ENCODE measurements at regions of chr3 and their contacts with region 1.

Region 1: GRCh38 chr3:157447026-157447694 is 10.5 kb downstream of the PTX3 start:
- DNase-seq: peak; percentile 17
- H3K4me3 ChIP-seq: no peak overlapping the region
- H3K27ac ChIP-seq: no peak overlapping the region
- H3K4me1 ChIP-seq: no peaks in the 10 kb centered on the region
- H3K27me3 ChIP-seq: peaks cover 2% of the 10 kb centered on the region
- CTCF ChIP-seq: peak; percentile 48 to 70

Region 2: GRCh38 chr3:157327018-157327417 is 120.1 kb before region 1 on chr3:
- CTCF ChIA-PET with region 1: no interaction called
- dilution Hi-C with region 1: no loop called
- in situ Hi-C with region 1: no loop called
- intact Hi-C with region 1: loop called (anchors 1 kb)
- DNase-seq: no peak
- H3K4me3 ChIP-seq: no peak overlapping the region
- H3K27ac ChIP-seq: no peak overlapping the region
- H3K4me1 ChIP-seq: no peaks in the 10 kb centered on the region
- H3K27me3 ChIP-seq: no peaks in the 10 kb centered on the region
- CTCF ChIP-seq: peak in 1 of 2 donors; percentile 5

Region 3: DNA sequence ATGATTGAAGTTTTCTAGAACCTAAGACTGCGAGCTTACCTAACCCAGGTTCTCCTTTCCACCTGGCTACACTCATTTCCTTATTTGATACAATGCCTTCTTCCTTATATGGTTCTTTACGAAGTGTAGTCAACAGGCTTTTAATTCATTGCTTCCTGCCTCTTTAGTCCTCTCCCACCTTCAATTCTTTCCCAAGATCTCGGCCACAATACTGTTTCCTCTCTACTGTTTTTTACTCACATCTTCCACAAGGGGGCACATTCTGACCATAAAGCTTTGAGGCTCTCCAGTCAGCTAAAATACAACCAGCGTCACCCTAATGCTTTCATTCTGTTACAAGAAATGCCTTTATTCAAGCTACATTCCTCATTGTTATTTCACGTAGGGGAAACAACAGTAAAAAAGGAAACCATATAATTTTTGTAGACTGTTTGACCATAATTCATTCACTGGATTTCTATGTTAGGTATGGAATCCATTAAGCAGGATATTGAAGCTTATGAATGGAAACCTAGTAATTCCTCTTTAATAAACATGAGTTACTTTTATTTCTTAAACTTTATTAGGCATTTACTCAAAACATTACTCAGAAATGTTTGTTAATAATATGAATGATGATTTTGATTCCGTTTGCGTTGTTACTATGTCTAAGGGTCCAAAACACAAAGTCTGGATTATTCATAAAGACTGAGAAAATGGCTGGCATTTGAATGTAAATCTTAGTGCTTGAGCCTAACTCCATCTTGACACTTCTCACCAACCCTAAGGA is 85.6 kb after region 1 on chr3:
- CTCF ChIA-PET with region 1: no interaction called
- dilution Hi-C with region 1: no loop called
- in situ Hi-C with region 1: no loop called
- intact Hi-C with region 1: no loop called
- DNase-seq: peak; percentile 68
- H3K4me3 ChIP-seq: no peak overlapping the region
- H3K27ac ChIP-seq: no peak overlapping the region
- H3K4me1 ChIP-seq: no peaks in the 10 kb centered on the region
- H3K27me3 ChIP-seq: no peaks in the 10 kb centered on the region
- CTCF ChIP-seq: peak; percentile 70 to 79